Esophagus muscularis mucosa (tissue), 4 donors: ENCODE measurements at regions of chr13 and their contacts with region 1.

Region 1: GRCh38 chr13:40982772-40983171 is 36.3 kb downstream of the ELF1 start:
- DNase-seq: no peak
- H3K4me3 ChIP-seq: peak overlapping the region; percentile 16 to 43 (median 30)
- H3K27ac ChIP-seq: peak overlapping the region; percentile 59 to 69 (median 66)
- H3K4me1 ChIP-seq: peaks cover 41 to 60% (median 48%) of the 10 kb centered on the region in 4 donors
- H3K27me3 ChIP-seq: no peaks in the 10 kb centered on the region
- CTCF ChIP-seq: no peak
- EP300 ChIP-seq: no peak
- POLR2A ChIP-seq: no peak

Region 2: GRCh38 chr13:41054212-41054877 is 71.6 kb after region 1 on chr13:
- intact Hi-C with region 1: loop called (anchors 10 kb)
- DNase-seq: no peak
- H3K4me3 ChIP-seq: no peak overlapping the region
- H3K27ac ChIP-seq: peak overlapping the region in 3 of 4 donors; percentile 28 to 67 (median 42)
- H3K4me1 ChIP-seq: peaks cover 81 to 92% (median 83%) of the 10 kb centered on the region in 4 donors
- H3K27me3 ChIP-seq: no peaks in the 10 kb centered on the region
- CTCF ChIP-seq: peak in 2 of 3 experiments; percentile 53 to 63
- EP300 ChIP-seq: no peak
- POLR2A ChIP-seq: no peak